PC-9 (cell line): ENCODE measurements at regions of chr1 and their contacts with region 1.

Region 1: GRCh38 chr1:93734999-93735398 is 53.4 kb upstream of the BCAR3 start:
- DNase-seq: no peak
- H3K4me3 ChIP-seq: no peak overlapping the region
- H3K27ac ChIP-seq: no peak overlapping the region
- H3K4me1 ChIP-seq: peaks cover 41% of the 10 kb centered on the region
- H3K27me3 ChIP-seq: no peaks in the 10 kb centered on the region
- CTCF ChIP-seq: peak; percentile 50; the same call in 1 of the 2 replicates

Region 2: GRCh38 chr1:93635614-93636543 is 99.1 kb before region 1 on chr1:
- CTCF ChIA-PET with region 1: interaction called, 3 read pairs
- POLR2A ChIA-PET with region 1: interaction called, 6 read pairs
- intact Hi-C with region 1: loop called (anchors 1 kb)
- DNase-seq: no peak
- H3K4me3 ChIP-seq: no peak overlapping the region
- H3K27ac ChIP-seq: no peak overlapping the region
- H3K4me1 ChIP-seq: peaks cover 61% of the 10 kb centered on the region
- H3K27me3 ChIP-seq: no peaks in the 10 kb centered on the region
- CTCF ChIP-seq: no peak

Region 3: GRCh38 chr1:93692983-93693591 is 41.9 kb before region 1 on chr1:
- CTCF ChIA-PET with region 1: no interaction called
- POLR2A ChIA-PET with region 1: interaction called, 7 read pairs
- intact Hi-C with region 1: loop called (anchors 1 kb)
- DNase-seq: peak; percentile 74 to 98
- H3K4me3 ChIP-seq: peak overlapping the region; percentile 43
- H3K27ac ChIP-seq: peak overlapping the region; percentile 99
- H3K4me1 ChIP-seq: peaks cover 75% of the 10 kb centered on the region
- H3K27me3 ChIP-seq: no peaks in the 10 kb centered on the region
- CTCF ChIP-seq: no peak

Region 4: DNA sequence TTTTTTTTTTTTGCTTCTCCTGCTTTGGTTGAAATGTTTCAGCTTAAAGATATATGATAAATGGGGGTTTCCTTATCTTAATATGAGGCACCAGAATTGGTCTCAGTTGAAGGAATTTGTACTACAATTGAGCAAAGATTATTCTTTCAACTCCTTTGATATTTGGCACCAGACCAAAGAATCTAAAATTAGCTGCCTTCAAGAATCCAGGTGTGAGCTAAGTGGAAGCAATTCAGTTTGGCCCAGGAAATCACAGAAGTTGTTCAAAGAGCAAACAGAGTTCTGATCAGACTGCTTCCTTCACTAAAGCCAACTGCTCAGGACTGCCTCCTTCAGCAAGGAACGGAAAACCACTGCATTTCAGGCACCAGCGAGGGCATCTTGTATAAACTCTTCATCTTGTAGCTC is 14.9 kb after region 1 on chr1:
- CTCF ChIA-PET with region 1: interaction called, 3 read pairs
- POLR2A ChIA-PET with region 1: interaction called, 14 read pairs
- intact Hi-C with region 1: loop called (anchors 2 kb)
- DNase-seq: peak in 1 of 2 experiments; percentile 82
- H3K4me3 ChIP-seq: no peak overlapping the region
- H3K27ac ChIP-seq: peak overlapping the region; percentile 49
- H3K4me1 ChIP-seq: peaks cover 53% of the 10 kb centered on the region
- H3K27me3 ChIP-seq: no peaks in the 10 kb centered on the region
- CTCF ChIP-seq: no peak; the same call in 1 of the 2 replicates

Region 5: DNA sequence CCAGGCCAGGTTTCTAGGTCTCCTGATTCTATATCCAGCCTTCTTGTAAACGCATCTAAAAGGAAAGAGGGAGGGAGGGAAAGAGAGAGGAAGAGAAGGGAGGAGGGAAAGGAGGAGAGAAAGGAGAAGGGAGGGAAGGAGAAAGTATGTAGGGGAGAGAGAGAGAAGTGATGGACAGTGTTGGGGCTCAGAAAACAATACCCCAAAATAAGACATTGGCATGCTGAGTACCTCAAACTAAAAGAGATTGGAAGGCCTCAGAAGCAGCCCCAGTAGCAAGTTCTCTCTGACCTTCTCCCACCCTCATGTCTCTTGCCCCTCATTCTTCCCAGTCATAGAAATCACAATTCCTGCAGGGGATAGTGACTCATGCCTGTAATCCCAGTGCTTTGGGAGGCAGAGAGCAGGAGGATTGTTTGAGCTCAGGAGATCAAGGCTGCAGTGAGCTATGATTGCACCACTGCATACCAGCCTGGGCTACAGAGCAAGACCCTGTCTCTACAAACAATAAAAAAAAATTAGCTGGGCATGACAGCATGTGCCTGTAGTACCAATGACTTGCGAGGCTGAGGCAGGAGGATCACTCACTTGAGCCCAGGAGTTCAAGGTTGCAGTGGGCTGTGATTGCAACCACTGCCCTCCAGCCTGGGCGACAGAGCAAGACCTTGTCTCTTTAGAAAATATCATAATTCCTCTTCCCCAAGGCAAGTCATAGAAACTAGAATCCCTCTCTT is 92.8 kb after region 1 on chr1:
- CTCF ChIA-PET with region 1: no interaction called
- POLR2A ChIA-PET with region 1: no interaction called
- intact Hi-C with region 1: loop called (anchors 5 kb)
- DNase-seq: peak in 1 of 2 experiments; percentile 90
- H3K4me3 ChIP-seq: peak overlapping the region; percentile 10; the same call in 1 of the 2 replicates
- H3K27ac ChIP-seq: peak overlapping the region; percentile 72
- H3K4me1 ChIP-seq: peaks cover 44% of the 10 kb centered on the region
- H3K27me3 ChIP-seq: no peaks in the 10 kb centered on the region
- CTCF ChIP-seq: no peak

Region 6: DNA sequence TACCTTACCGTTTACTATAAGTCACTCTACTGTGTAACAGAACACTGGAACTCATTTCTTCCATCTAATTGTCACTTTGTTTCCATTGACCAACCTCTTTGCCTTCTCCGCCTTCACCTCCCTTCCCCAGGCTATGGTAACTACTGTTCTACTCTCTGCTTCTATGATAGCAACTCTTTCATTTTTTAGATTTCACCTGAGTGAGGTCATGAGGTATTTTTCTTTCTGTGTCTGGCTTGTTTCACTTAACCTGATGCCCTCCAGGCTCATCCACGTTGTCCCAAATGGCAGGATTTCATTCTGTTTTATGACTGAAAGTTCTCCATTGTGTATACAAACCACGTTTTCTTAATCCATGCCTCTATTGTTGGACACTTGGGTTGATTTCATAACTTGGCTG is 209.7 kb after region 1 on chr1:
- CTCF ChIA-PET with region 1: no interaction called
- POLR2A ChIA-PET with region 1: no interaction called
- intact Hi-C with region 1: no loop called
- DNase-seq: no peak
- H3K4me3 ChIP-seq: no peak overlapping the region
- H3K27ac ChIP-seq: no peak overlapping the region
- H3K4me1 ChIP-seq: no peaks in the 10 kb centered on the region
- H3K27me3 ChIP-seq: no peaks in the 10 kb centered on the region
- CTCF ChIP-seq: no peak